GM12878 (cell line): ENCODE measurements at regions of chr11 and their contacts with region 1.

Region 1: DNA sequence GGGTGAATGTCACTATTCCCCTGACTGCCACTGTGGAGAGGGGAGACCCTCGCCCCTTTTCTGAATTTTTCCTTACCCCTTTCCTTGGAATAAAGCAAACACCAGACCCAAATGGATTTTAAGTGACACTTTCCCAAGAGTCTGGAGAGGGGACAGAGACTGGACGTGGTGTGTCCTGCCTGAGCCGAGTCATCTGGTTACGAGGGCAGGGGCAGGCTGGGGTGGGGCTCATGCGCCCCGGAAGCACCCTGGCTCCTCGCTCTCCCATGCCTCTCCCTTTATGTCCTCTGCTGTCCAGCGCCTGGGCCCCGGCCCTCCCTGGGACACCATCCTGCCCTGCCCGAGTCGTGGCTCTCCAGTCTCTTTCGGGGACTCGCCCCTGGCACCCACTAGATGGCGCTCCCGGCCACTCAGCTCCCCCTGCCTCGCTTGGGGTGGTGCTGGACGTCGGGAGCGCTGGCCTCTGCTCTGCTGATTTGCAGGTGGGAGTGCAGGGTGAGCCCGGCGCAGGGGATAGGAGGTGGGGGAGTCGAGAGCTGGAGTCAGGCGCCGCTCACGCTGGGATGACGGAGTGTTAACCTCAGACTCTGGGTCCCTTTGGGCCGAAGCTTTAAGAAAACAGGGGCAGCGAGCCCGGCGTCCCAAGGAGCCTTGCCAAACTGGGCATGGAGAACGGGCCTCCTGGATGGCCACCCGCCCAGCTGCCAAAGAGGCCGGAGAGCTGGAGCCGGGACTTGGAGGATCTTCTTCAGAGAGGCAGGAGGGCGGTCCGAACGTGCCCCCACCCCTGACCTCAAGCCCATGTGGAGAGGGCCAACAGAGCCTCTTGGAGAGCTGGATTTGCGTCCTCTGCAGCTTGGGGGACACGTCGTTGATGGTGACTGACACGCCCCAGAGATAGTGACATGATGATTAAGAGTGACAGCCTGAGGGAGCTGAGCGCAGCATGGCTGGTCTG is 89.9 kb downstream of the RPS6KA4 start:
- DNase-seq: no peak
- ATAC-seq: peak; percentile 95
- H3K4me3 ChIP-seq: peak overlapping the region; percentile 67
- H3K27ac ChIP-seq: peak overlapping the region; percentile 58
- H3K4me1 ChIP-seq: peaks cover 21% of the 10 kb centered on the region
- H3K27me3 ChIP-seq: 0 out of 4 replicates have a peak, but pooled peaks cover 0 to 2% of the 10 kb centered on the region in 2 experiments
- CTCF ChIP-seq: peak; percentile 80 to 90 (median 90)
- EP300 ChIP-seq: no peak
- POLR2A ChIP-seq: no peak
- RAD21 ChIP-seq: peak; percentile 56

Region 2: GRCh38 chr11:64317957-64318693 is 130.8 kb before region 1 on chr11 and contains the start of gene PRDX5:
- CTCF ChIA-PET with region 1: interaction called, 8 read pairs
- POLR2A ChIA-PET with region 1: no interaction called
- RAD21 ChIA-PET with region 1: interaction called, 3 read pairs
- SMC1A ChIA-PET with region 1: no interaction called
- in situ Hi-C with region 1: no loop called
- intact Hi-C with region 1: loop called (anchors 2 kb)
- DNase-seq: peak; percentile 92
- ATAC-seq: peak; percentile 86
- H3K4me3 ChIP-seq: peak within 1 kb of the TSS; percentile 80
- H3K27ac ChIP-seq: peak within 1 kb of the TSS; percentile 99
- H3K4me1 ChIP-seq: peaks cover 9% of the 10 kb centered on the region
- H3K27me3 ChIP-seq: no peaks in the 10 kb centered on the region
- CTCF ChIP-seq: peak; percentile 41 to 91 (median 41); a peak in 5 of 6 replicates
- EP300 ChIP-seq: no peak
- POLR2A ChIP-seq: peak; percentile 86
- RAD21 ChIP-seq: peak; percentile 56; the same call in 1 of the 2 replicates
- polyA plus RNA-seq, gene PRDX5: 95.7 to 203 TPM

Region 3: GRCh38 chr11:64458997-64459396 is 10.1 kb after region 1 on chr11:
- CTCF ChIA-PET with region 1: interaction called, 20 read pairs
- POLR2A ChIA-PET with region 1: no interaction called
- RAD21 ChIA-PET with region 1: no interaction called
- SMC1A ChIA-PET with region 1: no interaction called
- in situ Hi-C with region 1: no loop called
- intact Hi-C with region 1: no loop called
- DNase-seq: no peak
- ATAC-seq: no peak
- H3K4me3 ChIP-seq: no peak overlapping the region
- H3K27ac ChIP-seq: no peak overlapping the region
- H3K4me1 ChIP-seq: no peaks in the 10 kb centered on the region
- H3K27me3 ChIP-seq: no peaks in the 10 kb centered on the region; a peak in 1 of 4 replicates
- CTCF ChIP-seq: no peak
- EP300 ChIP-seq: no peak
- POLR2A ChIP-seq: no peak
- RAD21 ChIP-seq: no peak

Region 4: GRCh38 chr11:64516226-64516625 is 67.3 kb after region 1 on chr11:
- CTCF ChIA-PET with region 1: interaction called, 11 read pairs
- POLR2A ChIA-PET with region 1: no interaction called
- RAD21 ChIA-PET with region 1: no interaction called
- SMC1A ChIA-PET with region 1: interaction called, 3 read pairs
- in situ Hi-C with region 1: no loop called
- intact Hi-C with region 1: no loop called
- DNase-seq: no peak
- ATAC-seq: no peak
- H3K4me3 ChIP-seq: no peak overlapping the region
- H3K27ac ChIP-seq: no peak overlapping the region
- H3K4me1 ChIP-seq: no peaks in the 10 kb centered on the region
- H3K27me3 ChIP-seq: peaks cover 0 to 2% of the 10 kb centered on the region in 2 experiments; a peak in 3 of 4 replicates
- CTCF ChIP-seq: peak in 2 of 3 experiments; percentile 21 to 24; a peak in 2 of 6 replicates
- EP300 ChIP-seq: no peak
- POLR2A ChIP-seq: no peak
- RAD21 ChIP-seq: no peak

Region 5: DNA sequence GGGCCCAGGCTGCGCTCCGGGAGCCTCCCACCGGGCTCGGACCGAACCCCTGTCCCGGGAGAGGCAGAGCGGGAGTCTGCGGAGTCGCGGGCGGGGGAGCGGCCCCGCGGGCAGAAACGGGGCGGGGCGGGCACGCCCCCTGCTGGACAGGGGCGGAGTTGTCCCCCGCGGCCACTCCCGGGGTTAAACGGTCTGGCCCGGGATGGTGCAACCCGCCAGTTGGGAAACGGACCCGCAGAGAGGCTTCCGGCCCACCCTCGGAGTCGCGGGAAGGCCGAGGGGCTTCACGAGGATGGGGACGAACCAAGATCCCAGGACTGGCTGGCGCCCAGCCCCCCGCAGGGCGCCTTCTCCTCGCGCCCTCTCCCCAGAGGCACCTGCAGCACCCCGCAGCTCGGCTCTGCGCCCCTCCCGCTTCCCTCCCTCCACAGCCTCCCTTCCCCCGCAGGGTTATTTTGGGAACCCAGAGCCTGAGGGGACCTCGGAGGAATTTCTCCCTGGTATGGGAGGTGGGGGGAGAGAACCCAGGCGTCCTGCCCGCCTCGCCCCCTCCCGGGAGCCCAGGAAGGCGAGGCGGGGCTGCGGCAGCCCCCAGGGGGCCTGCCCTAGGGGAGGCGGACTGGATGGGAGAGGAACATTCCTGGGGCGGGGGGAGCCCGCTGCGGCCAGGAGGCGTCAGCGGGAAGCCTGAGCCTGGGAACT is 294.2 kb after region 1 on chr11:
- CTCF ChIA-PET with region 1: interaction called, 6 read pairs
- POLR2A ChIA-PET with region 1: no interaction called
- RAD21 ChIA-PET with region 1: no interaction called
- SMC1A ChIA-PET with region 1: no interaction called
- in situ Hi-C with region 1: no loop called
- intact Hi-C with region 1: loop called (anchors 2 kb)
- DNase-seq: no peak
- ATAC-seq: peak; percentile 70
- H3K4me3 ChIP-seq: peak overlapping the region; percentile 35
- H3K27ac ChIP-seq: no peak overlapping the region
- H3K4me1 ChIP-seq: peaks cover 29% of the 10 kb centered on the region
- H3K27me3 ChIP-seq: peaks cover 0 to 5% of the 10 kb centered on the region in 2 experiments; a peak in 3 of 4 replicates
- CTCF ChIP-seq: peak; percentile 69 to 93 (median 81)
- EP300 ChIP-seq: no peak
- POLR2A ChIP-seq: no peak
- RAD21 ChIP-seq: peak; percentile 62